Activated CD4-positive, alpha-beta T cell treated with anti-CD3 and anti-CD28 coated beads for 36 hours (primary cell): ENCODE measurements at regions of chr19 and their contacts with region 1.

Region 1: GRCh38 chr19:21328885-21329605 is at the start of gene ZNF708:
- DNase-seq: peak; percentile 85
- ATAC-seq: peak; percentile 100
- H3K4me3 Mint-ChIP-seq: peak within 1 kb of the TSS; percentile 97
- H3K27ac Mint-ChIP-seq: peak within 1 kb of the TSS; percentile 100
- H3K4me1 Mint-ChIP-seq: peaks cover 33% of the 10 kb centered on the region
- H3K27me3 Mint-ChIP-seq: no peaks in the 10 kb centered on the region
- total RNA-seq, gene ZNF708: 11.7 to 11.8 TPM

Region 2: GRCh38 chr19:20923077-20923871 is 405.8 kb before region 1 on chr19 and contains the start of gene ZNF85:
- CTCF ChIA-PET with region 1: no interaction called
- POLR2A ChIA-PET with region 1: interaction called, 4 read pairs
- intact Hi-C with region 1: loop called in 1 of 2 experiments (anchors 1 kb)
- DNase-seq: peak; percentile 95
- ATAC-seq: peak; percentile 99
- H3K4me3 Mint-ChIP-seq: peak within 1 kb of the TSS; percentile 91
- H3K27ac Mint-ChIP-seq: peak within 1 kb of the TSS; percentile 96
- H3K4me1 Mint-ChIP-seq: peaks cover 25% of the 10 kb centered on the region
- H3K27me3 Mint-ChIP-seq: no peaks in the 10 kb centered on the region
- total RNA-seq, gene ZNF85: 23.2 to 29.3 TPM

Region 3: GRCh38 chr19:21082011-21082975 is 246.8 kb before region 1 on chr19 and contains the start of gene ZNF714:
- CTCF ChIA-PET with region 1: no interaction called
- POLR2A ChIA-PET with region 1: no interaction called
- intact Hi-C with region 1: loop called in 1 of 2 experiments (anchors 10 kb)
- DNase-seq: peak; percentile 89
- ATAC-seq: peak; percentile 98
- H3K4me3 Mint-ChIP-seq: peak within 1 kb of the TSS; percentile 99
- H3K27ac Mint-ChIP-seq: peak within 1 kb of the TSS; percentile 97
- H3K4me1 Mint-ChIP-seq: peaks cover 24% of the 10 kb centered on the region
- H3K27me3 Mint-ChIP-seq: no peaks in the 10 kb centered on the region
- total RNA-seq, gene ZNF714: 17.4 to 20.0 TPM

Region 4: GRCh38 chr19:21358768-21359451 is 29.9 kb after region 1 on chr19 and contains the start of gene ZNF738:
- CTCF ChIA-PET with region 1: no interaction called
- POLR2A ChIA-PET with region 1: interaction called, 4 read pairs
- intact Hi-C with region 1: loop called (anchors 1 to 2 kb)
- DNase-seq: peak; percentile 94
- ATAC-seq: peak; percentile 98
- H3K4me3 Mint-ChIP-seq: peak within 1 kb of the TSS; percentile 99
- H3K27ac Mint-ChIP-seq: peak within 1 kb of the TSS; percentile 99
- H3K4me1 Mint-ChIP-seq: peaks cover 10% of the 10 kb centered on the region
- H3K27me3 Mint-ChIP-seq: no peaks in the 10 kb centered on the region
- total RNA-seq, gene ZNF738: 15.8 to 19.5 TPM

Region 5: DNA sequence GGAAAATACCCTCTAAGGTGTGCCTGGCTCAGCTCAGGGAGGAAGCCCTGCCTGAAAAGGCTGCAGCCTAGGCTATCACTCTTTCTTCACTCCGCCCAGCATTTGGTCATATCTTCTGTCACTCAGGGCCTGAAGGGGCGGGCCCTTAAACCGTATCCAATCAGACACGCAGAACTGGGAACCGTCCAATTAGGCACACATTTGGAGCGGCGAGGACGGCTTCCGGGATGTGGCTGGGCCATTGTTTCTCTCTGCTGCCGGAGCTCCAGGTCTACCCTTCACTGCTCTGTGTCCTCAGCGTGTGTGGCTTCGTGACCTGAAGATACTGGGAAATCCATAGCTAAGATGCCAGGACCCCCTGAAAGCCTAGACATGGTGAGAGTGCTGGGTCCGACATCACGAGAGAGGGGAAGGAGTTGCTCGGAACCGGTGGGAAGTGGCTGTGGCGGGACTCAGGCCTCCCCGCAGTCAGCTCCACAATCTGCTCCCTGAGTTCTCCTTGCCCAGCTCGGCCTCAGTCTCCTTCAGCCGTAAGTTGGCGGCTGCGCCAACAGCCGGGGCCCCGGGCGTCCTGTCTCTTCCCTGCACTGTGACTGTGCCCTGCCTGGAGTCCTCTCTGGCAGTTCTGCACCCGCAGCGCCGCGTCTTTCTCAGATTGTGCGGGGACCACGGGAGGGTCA is 68.0 kb after region 1 on chr19 and contains the start of gene ZNF493:
- CTCF ChIA-PET with region 1: interaction called, 4 read pairs
- POLR2A ChIA-PET with region 1: no interaction called
- intact Hi-C with region 1: loop called (anchors 2 kb)
- DNase-seq: peak; percentile 95
- ATAC-seq: peak; percentile 100
- H3K4me3 Mint-ChIP-seq: peak within 1 kb of the TSS; percentile 98
- H3K27ac Mint-ChIP-seq: peak within 1 kb of the TSS; percentile 92
- H3K4me1 Mint-ChIP-seq: peaks cover 32% of the 10 kb centered on the region
- H3K27me3 Mint-ChIP-seq: no peaks in the 10 kb centered on the region
- total RNA-seq, gene ZNF493: 11.9 to 12.8 TPM

Region 6: DNA sequence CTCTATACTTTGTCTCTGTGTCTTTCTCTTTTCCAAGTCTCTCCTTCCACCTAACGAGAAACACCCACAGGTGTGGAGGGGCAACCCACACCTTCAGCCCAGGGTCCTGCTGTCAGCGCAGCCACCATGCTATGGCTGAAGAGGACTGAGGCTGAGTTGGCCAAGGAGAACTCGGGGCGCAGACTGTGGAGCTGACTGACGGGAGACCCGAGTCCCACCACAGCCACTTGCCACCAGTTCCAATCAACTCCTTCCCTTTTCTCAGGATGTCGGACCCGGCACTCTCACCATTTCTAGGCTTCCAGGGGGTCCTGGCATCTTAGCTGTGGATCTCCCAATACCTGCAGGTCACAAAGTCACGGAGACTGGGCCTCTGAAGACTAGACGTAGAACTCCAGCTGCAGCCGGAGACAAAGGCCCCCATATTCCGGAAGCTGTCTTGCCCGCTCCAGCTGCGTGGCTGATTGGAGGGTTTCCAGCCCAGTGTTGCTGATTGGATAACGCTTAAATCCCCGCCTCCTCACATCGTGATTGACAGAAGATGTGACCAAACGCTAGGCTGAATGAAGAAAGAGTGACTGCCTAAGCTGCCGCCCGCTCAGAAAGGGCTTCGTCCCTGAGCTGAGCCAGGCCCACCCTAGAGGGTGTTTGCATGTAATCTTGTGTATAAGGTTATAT is 239.9 kb after region 1 on chr19:
- CTCF ChIA-PET with region 1: no interaction called
- POLR2A ChIA-PET with region 1: no interaction called
- intact Hi-C with region 1: loop called in 1 of 2 experiments (anchors 10 kb)
- DNase-seq: peak; percentile 92
- ATAC-seq: peak; percentile 97
- H3K4me3 Mint-ChIP-seq: peak overlapping the region; percentile 86
- H3K27ac Mint-ChIP-seq: peak overlapping the region; percentile 100
- H3K4me1 Mint-ChIP-seq: peaks cover 29% of the 10 kb centered on the region
- H3K27me3 Mint-ChIP-seq: no peaks in the 10 kb centered on the region

Region 7: DNA sequence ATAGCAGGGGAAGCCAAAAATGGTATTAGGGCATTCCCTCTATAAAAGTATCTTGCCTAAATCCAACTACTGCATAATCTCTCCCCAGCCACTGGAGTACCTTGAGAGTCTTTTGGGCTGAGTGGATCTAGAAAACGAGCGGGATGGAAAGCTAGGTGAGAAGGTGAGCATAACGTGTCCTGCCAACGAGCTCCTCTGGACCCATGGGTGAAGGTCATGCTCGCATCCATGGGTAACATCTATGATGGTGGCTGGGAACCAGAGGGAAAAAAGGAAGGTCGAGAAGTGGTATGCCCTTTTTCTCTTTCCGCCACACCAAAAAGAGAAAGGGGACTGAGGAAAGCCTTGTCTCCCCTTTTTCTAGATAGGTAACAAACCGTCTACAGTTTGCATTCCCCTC is 618.7 kb after region 1 on chr19:
- CTCF ChIA-PET with region 1: no interaction called
- POLR2A ChIA-PET with region 1: no interaction called
- intact Hi-C with region 1: no loop called
- DNase-seq: peak; percentile 13
- ATAC-seq: no peak
- H3K4me3 Mint-ChIP-seq: no peak overlapping the region
- H3K27ac Mint-ChIP-seq: no peak overlapping the region
- H3K4me1 Mint-ChIP-seq: no peaks in the 10 kb centered on the region
- H3K27me3 Mint-ChIP-seq: no peaks in the 10 kb centered on the region

Region 8: DNA sequence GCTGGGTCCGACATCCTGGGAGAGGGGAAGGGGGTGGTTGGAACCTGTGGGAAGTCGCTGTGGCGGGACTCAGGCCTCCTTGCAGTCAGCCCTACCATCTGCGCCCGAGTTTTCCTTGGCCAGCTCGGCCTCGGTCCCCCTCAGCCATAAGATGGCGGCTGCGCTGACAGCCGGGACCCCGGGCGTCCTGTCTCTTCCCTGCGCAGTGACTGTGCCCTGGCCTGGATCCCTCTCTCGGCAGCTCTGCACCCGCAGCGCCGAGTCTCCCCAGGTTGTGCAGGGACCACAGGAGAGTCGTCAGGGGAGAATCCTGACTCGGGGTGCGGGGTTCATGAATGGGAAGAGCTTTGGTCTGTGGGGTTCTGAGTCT is 723.6 kb after region 1 on chr19:
- CTCF ChIA-PET with region 1: no interaction called
- POLR2A ChIA-PET with region 1: no interaction called
- intact Hi-C with region 1: loop called in 1 of 2 experiments (anchors 5 kb)
- DNase-seq: peak; percentile 52
- ATAC-seq: peak; percentile 47
- H3K4me3 Mint-ChIP-seq: peak overlapping the region; percentile 90
- H3K27ac Mint-ChIP-seq: peak overlapping the region; percentile 93
- H3K4me1 Mint-ChIP-seq: peaks cover 5% of the 10 kb centered on the region
- H3K27me3 Mint-ChIP-seq: no peaks in the 10 kb centered on the region